H1 (cell line): ENCODE measurements at regions of chr15 and their contacts with region 1.

Region 1: DNA sequence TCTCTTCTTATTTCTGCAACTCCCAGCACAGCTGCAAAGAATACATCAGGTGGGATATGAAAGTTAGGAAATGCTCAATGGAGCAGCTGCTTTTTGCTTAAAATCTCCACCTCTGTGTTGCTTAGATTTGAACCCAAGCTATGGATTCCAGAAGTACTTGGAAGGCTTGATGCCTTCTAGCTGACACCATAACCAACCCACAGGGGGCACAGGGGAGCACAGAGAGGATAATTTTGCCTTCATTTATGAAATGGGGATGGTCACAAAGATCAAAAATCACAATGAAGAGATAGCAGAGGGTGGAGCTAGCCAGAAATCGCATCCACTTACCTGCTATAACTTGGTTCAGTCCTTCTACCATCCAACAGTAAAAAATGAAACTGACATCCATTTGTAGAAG is 75.7 kb downstream of the DUT start:
- DNase-seq: no peak
- H3K4me3 ChIP-seq: no peak overlapping the region
- H3K27ac ChIP-seq: no peak overlapping the region
- H3K4me1 ChIP-seq: no peaks in the 10 kb centered on the region
- H3K27me3 ChIP-seq: no peaks in the 10 kb centered on the region
- CTCF ChIP-seq: peak in 2 of 3 experiments; percentile 37 to 52; a peak in 2 of 4 replicates
- EP300 ChIP-seq: no peak
- POLR2A ChIP-seq: no peak
- RAD21 ChIP-seq: peak; percentile 24 to 48; a peak in 3 of 4 replicates

Region 2: DNA sequence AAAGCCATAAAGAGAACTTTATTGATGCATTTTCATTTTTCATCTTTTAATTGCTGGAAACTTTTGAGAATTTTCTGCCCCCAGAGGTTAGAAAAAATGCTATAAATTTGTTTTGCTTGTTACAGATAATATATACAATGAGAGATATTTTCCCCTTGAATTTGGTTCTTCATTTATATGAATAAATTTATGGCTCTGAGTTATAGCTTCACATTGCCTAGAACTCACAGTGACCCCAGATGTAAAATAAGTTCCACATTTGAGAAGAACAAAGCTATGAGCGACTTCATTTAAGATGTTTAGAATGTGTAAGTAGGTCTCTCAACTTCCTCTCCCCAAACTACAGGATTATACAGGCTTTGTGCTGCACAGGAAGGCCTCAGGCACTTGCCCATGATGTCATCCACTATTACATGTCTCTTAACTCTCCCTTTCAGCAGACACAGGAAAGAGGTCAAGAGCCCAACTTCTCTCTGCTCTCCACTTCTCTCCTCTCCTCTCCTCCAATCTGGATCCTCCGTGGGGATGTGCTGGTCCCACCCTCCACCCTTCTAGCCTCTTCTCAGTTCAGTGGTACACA is 17.1 kb after region 1 on chr15:
- CTCF ChIA-PET with region 1: interaction called, 44 read pairs
- POLR2A ChIA-PET with region 1: interaction called, 3 read pairs
- DNase-seq: no peak
- H3K4me3 ChIP-seq: no peak overlapping the region
- H3K27ac ChIP-seq: no peak overlapping the region
- H3K4me1 ChIP-seq: peaks cover 2 to 7% (median 3%) of the 10 kb centered on the region in 4 experiments; a peak in 4 of 7 replicates
- H3K27me3 ChIP-seq: no peaks in the 10 kb centered on the region
- CTCF ChIP-seq: no peak
- EP300 ChIP-seq: no peak
- POLR2A ChIP-seq: no peak
- RAD21 ChIP-seq: no peak

Region 3: DNA sequence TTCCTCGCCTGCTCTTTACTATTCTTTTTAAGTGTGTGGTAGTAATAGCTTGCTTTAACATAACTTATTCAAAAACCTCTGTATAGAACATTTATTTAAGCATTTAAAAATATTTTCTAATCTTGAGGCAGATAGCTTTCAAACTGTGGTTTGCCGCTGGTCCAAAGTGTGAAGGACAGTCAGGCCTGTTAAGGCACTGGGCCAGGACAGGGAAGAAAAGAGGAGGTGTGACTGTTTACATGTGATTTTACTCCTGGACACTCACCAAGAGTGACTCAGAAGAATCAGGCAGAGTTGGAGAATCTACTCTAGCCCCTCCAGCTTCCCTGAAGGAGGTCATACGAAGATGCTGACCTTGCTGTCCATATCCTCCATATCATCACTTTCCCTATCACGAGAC is 359.3 kb after region 1 on chr15:
- CTCF ChIA-PET with region 1: no interaction called
- POLR2A ChIA-PET with region 1: no interaction called
- DNase-seq: no peak
- H3K4me3 ChIP-seq: no peak overlapping the region
- H3K27ac ChIP-seq: no peak overlapping the region
- H3K4me1 ChIP-seq: no peaks in the 10 kb centered on the region
- H3K27me3 ChIP-seq: peaks cover 0 to 1% (median 0%) of the 10 kb centered on the region in 4 experiments; a peak in 1 of 7 replicates
- CTCF ChIP-seq: no peak
- EP300 ChIP-seq: no peak
- POLR2A ChIP-seq: no peak
- RAD21 ChIP-seq: no peak